ENCODE measurements at regions of chrX and their contacts with region 1.

Region 1: GRCh38 chrX:39196192-39197102 is 395.2 kb downstream of the MID1IP1 start:
- DNase-seq: peak in 3 of 9 donors; percentile 10 to 52 (median 21)
- ATAC-seq: peak; percentile 85
- H3K4me3 ChIP-seq: peak overlapping the region; percentile 52
- H3K4me3 Mint-ChIP-seq: peak overlapping the region in 9 of 10 donors; percentile 33 to 84 (median 69)
- H3K27ac ChIP-seq: no peak overlapping the region
- H3K27ac Mint-ChIP-seq: peak overlapping the region in 2 of 9 donors; percentile 4 to 85
- H3K4me1 ChIP-seq: peaks cover 14 to 18% of the 10 kb centered on the region in 2 donors
- H3K4me1 Mint-ChIP-seq: peaks cover 9 to 57% (median 25%) of the 10 kb centered on the region in 7 donors
- H3K27me3 ChIP-seq: no peaks in the 10 kb centered on the region
- H3K27me3 Mint-ChIP-seq: no peaks in the 10 kb centered on the region

Region 2: GRCh38 chrX:39162322-39162735 is 34.1 kb before region 1 on chrX:
- CTCF ChIA-PET with region 1: no interaction called
- POLR2A ChIA-PET with region 1: no interaction called
- intact Hi-C with region 1: loop called (anchors 2 to 5 kb)
- DNase-seq: peak in 8 of 9 donors; percentile 17 to 47 (median 35)
- ATAC-seq: peak; percentile 83
- H3K4me3 ChIP-seq: no peak overlapping the region
- H3K4me3 Mint-ChIP-seq: peak overlapping the region; percentile 35 to 84 (median 77)
- H3K27ac ChIP-seq: no peak overlapping the region
- H3K27ac Mint-ChIP-seq: peak overlapping the region in 2 of 9 donors; percentile 50 to 81
- H3K4me1 ChIP-seq: no peaks in the 10 kb centered on the region
- H3K4me1 Mint-ChIP-seq: peaks cover 0 to 20% (median 10%) of the 10 kb centered on the region in 7 donors
- H3K27me3 ChIP-seq: no peaks in the 10 kb centered on the region
- H3K27me3 Mint-ChIP-seq: peaks cover 0 to 11% (median 5%) of the 10 kb centered on the region in 5 donors

Region 3: DNA sequence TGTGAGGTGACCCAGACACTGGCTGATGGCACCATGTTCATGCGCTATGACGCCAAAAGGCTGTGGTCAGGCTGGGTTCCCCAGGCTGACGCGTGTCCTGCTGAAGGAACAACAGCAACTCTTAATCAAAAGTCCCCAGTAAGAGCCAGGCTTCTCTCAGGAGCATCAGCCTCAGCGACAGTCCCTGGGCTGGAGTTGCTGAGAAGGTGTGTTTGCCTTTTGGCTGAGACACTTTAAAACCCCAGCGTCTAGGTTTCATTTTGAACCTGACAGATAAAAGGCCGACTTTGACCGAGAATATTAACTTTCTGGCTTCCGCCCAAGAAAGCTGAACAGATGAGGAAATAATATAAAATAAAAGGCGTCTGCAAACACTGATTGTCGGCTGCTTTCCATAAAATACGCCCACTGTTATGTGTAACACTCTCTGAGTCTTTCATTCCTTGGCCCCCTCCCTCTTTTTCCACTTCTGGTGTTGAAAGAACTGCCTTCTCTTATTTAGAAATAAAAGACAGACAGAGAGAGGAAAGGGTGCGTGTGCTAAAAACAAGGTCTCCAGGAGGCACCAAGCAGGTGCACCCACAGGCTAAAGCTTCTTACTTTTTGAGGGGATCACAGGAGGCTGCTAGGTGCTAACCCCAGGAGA is 21.6 kb before region 1 on chrX:
- CTCF ChIA-PET with region 1: no interaction called
- POLR2A ChIA-PET with region 1: no interaction called
- intact Hi-C with region 1: loop called in 1 of 2 experiments (anchors 2 kb)
- DNase-seq: peak; percentile 9 to 63 (median 46)
- ATAC-seq: peak; percentile 89
- H3K4me3 ChIP-seq: peak overlapping the region; percentile 26
- H3K4me3 Mint-ChIP-seq: peak overlapping the region; percentile 58 to 79 (median 73)
- H3K27ac ChIP-seq: peak overlapping the region; percentile 67
- H3K27ac Mint-ChIP-seq: peak overlapping the region; percentile 82 to 94 (median 91)
- H3K4me1 ChIP-seq: peaks cover 0 to 16% of the 10 kb centered on the region in 2 donors
- H3K4me1 Mint-ChIP-seq: peaks cover 0 to 34% (median 23%) of the 10 kb centered on the region in 7 donors
- H3K27me3 ChIP-seq: no peaks in the 10 kb centered on the region
- H3K27me3 Mint-ChIP-seq: no peaks in the 10 kb centered on the region

Measured in naive thymus-derived CD4-positive, alpha-beta T cell (primary cell).